AG04450 (cell line): ENCODE measurements at regions of chr1 and their contacts with region 1.

Region 1: DNA sequence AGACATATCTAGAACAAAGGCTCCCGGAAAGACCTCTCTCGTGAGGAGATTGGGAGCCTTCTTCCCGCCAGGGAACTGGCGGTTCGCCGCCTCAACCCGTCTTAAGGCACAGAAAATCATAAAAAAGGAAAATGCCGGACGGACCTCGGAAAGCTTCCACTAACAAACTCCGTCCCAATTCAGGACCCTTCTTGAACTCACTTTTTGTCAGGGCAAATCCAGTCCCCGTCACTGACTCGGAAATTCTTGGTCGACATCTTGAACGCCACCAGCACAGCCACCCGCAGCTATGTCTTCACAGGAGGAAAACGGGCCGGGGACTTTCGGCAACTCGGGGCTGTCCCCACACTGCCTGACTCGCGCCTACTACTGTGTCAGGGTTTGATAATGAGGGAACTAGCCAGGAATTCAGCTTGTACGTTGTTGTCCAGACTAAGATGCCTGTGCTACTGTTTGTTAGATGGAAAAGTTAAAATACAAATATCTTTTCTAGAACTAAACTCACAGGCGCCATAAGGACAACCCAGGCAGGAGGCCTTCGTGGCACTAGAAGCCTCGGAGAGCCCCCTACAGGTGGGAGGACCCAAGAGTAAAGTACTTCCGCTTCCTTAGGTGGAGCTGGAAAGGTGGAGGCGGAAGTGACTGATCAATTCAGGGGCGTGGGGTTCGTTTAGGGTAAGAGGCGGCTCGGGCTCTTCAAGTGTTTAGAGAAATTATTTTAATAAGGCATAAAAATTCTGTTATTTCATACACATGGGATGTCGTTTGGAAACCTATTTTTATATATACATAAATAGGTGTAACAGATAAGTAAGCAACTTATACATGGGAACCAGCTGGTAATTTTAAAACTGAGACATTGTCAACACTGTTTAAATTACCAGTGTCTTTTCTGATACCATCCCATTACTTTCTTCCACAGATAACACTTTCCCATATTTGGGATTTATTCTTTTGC is at the start of gene ZRANB2:
- DNase-seq: peak; percentile 87
- H3K4me3 ChIP-seq: peak within 1 kb of the TSS; percentile 88
- H3K27ac ChIP-seq: peak within 1 kb of the TSS; percentile 79
- H3K27me3 ChIP-seq: no peaks in the 10 kb centered on the region
- CTCF ChIP-seq: peak; percentile 77
- polyA plus RNA-seq, gene ZRANB2: 81.7 and 126 TPM in 2 replicates

Region 2: DNA sequence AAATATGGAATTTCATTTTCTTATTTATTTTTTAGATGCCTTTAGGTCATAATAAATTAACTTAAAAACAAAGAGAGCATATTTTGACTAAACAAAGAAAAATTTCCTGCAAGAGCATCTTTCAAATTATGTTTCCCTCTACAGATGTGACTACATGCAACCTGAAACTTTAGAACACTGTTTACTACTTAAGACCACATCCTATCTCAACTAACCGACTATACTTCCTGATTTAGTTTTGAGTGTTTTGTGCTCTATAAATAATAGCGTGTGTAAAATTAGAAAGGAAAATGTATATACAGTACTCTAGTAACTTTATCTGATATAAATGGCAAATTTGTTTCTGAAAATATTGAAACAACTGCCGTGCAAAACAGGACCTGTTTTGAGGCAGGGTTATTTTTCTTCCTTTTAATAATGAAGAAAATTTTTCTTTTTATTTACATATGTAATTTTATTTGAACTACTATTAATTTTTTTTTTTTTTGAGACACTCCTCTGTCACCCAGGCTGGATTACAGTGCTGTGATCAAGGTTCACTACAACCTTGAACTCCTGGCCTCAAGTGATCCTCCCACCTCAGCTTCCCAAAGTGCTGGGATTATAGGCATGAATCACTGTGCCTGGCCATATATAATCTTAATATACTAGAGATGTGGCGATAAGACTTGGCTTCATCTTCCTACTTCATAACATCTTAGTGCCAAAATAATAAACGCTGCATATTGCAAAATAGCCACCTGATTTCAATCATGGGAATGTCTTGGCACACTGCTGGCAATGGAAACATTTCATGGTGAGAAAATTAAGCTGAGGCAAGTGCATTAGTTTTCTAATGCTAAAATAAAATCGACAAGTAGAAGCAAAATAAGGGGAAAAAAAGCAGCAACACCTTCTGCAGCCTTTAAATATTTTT is 12.4 kb before region 1 on chr1:
- CTCF ChIA-PET with region 1: interaction called, 24 read pairs
- POLR2A ChIA-PET with region 1: interaction called, 6 read pairs
- DNase-seq: no peak
- H3K4me3 ChIP-seq: no peak overlapping the region
- H3K27ac ChIP-seq: no peak overlapping the region
- H3K27me3 ChIP-seq: no peaks in the 10 kb centered on the region
- CTCF ChIP-seq: no peak

Region 3: DNA sequence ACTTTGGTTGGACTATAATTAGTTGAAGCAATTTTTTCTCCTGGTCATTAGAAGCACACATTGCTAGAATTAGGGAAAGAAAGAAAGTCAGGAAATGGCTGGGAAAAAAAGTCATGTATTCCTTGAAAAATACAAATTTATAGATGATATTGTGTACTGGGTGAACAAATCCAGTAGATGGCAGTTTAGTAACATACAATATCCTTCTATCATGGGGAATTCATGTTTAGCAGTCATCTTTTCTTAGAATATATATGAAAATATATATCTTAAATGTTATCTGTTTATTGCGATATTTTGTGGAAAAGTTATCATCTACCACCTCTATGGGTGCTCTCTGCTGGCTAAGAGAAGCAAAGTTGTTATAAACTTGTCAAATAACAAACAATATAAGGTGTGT is 12.9 kb after region 1 on chr1:
- CTCF ChIA-PET with region 1: interaction called, 16 read pairs
- POLR2A ChIA-PET with region 1: interaction called, 7 read pairs
- DNase-seq: no peak
- H3K4me3 ChIP-seq: no peak overlapping the region
- H3K27ac ChIP-seq: no peak overlapping the region
- H3K27me3 ChIP-seq: no peaks in the 10 kb centered on the region
- CTCF ChIP-seq: peak; percentile 58